BJ (cell line): ENCODE measurements at regions of chr3 and their contacts with region 1.

Region 1: DNA sequence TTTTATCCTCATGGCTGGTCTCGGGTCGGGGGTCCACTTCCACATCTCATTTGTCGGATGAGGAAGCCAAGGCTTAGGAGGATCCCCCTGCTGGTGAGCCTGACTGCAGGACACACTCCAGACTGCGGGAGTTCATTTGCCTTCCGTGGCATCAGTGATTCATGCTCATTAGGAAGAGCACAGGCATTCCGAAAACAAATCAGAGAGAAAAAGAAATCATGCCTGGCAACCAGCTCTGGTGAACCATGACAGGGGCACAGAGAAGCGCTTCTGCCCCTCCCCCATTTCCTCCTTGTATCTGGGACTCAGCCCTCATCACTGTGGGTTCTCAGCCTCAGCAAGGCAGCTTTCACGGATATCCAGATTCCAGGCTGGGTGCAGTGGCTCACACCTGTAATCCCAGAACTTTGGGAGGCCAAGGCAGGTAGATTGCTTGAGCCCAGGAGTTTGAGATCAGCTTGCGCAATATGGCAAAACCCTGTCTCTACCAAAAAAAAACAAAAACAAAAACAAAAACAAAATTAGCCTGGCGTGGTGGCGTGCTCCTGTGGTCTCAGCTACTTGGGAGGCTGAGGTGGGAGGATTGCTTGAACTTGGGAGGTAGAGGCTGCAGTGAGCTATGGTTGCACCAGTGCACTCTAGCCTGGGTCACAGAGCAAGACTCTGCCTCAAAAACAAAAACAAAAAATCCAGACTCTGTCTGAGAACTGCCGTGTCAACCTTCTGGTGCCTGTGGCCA is 28.4 kb downstream of the IRAK2 start:
- DNase-seq: peak; percentile 53
- H3K4me3 ChIP-seq: no peak overlapping the region
- H3K27me3 ChIP-seq: no peaks in the 10 kb centered on the region
- CTCF ChIP-seq: peak; percentile 73

Region 2: GRCh38 chr3:10205451-10206165 is 12.5 kb after region 1 on chr3:
- CTCF ChIA-PET with region 1: interaction called, 15 read pairs
- POLR2A ChIA-PET with region 1: no interaction called
- DNase-seq: peak; percentile 73
- H3K4me3 ChIP-seq: no peak overlapping the region
- H3K27me3 ChIP-seq: no peaks in the 10 kb centered on the region
- CTCF ChIP-seq: no peak